Thyroid gland (tissue), 4 donors: ENCODE measurements at regions of chr14 and their contacts with region 1.

Region 1: DNA sequence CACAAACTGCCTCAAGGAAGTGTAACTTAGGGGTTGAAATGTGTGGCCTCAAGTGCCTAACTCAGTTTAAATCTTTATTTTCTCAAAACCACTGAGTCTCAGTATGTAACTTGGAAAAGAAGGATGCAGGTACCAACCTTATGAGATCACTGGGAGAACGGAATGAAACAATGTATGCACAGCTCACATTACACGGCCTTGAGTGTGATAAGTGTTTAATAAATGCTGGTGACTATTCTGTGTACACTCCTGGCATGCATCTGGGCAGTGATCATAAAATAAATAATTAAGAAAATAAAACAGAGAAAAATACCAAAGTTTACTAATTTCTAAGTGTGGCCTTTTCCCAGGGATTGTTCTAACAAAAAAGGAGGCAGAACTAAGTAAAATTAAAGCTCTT is 974.5 kb upstream of the FLRT2 start:
- DNase-seq: no peak
- H3K4me3 ChIP-seq: no peak overlapping the region
- H3K27ac ChIP-seq: no peak overlapping the region
- H3K4me1 ChIP-seq: no peaks in the 10 kb centered on the region
- H3K27me3 ChIP-seq: no peaks in the 10 kb centered on the region
- CTCF ChIP-seq: no peak
- POLR2A ChIP-seq: no peak

Region 2: GRCh38 chr14:84674636-84675035 is 119.1 kb after region 1 on chr14:
- intact Hi-C with region 1: no loop called
- DNase-seq: no peak
- H3K4me3 ChIP-seq: no peak overlapping the region
- H3K27ac ChIP-seq: no peak overlapping the region
- H3K4me1 ChIP-seq: no peaks in the 10 kb centered on the region
- H3K27me3 ChIP-seq: no peaks in the 10 kb centered on the region
- CTCF ChIP-seq: no peak
- POLR2A ChIP-seq: no peak

Region 3: GRCh38 chr14:85038526-85039352 is 483.2 kb after region 1 on chr14:
- intact Hi-C with region 1: loop called (anchors 10 kb)
- DNase-seq: no peak
- H3K4me3 ChIP-seq: no peak overlapping the region
- H3K27ac ChIP-seq: no peak overlapping the region
- H3K4me1 ChIP-seq: no peaks in the 10 kb centered on the region
- H3K27me3 ChIP-seq: no peaks in the 10 kb centered on the region
- CTCF ChIP-seq: no peak
- POLR2A ChIP-seq: no peak